MCF 10A (cell line): ENCODE measurements at regions of chrX and their contacts with region 1.

Region 1: DNA sequence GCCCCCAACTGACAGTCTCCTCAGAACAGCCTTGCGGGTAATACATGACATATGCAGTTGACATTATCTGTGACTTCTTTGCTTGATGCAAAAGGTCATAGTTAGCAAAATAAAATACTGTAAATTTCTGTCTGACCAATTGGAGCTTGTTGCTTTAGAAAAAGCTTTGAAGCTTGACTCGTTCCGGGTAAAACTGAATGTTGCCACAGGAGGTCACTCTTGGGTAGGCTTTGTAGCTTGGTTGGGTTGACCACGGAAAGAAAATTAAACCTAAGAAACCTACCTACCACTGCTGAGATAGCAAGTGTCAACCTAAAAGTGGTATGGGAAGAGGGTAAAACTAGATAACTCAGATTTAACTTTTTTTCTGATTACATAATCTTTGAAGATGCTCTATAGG is 23.2 kb downstream of the PRPS2 start:
- DNase-seq: peak; percentile 64
- H3K4me3 Mint-ChIP-seq: no peak overlapping the region
- H3K27ac Mint-ChIP-seq: no peak overlapping the region
- H3K4me1 Mint-ChIP-seq: peaks cover 5% of the 10 kb centered on the region
- H3K27me3 Mint-ChIP-seq: peaks cover 21% of the 10 kb centered on the region
- CTCF ChIP-seq: peak; percentile 57

Region 2: GRCh38 chrX:12777670-12778069 is 36.8 kb before region 1 on chrX:
- CTCF ChIA-PET with region 1: no interaction called
- POLR2A ChIA-PET with region 1: no interaction called
- intact Hi-C with region 1: no loop called
- DNase-seq: no peak
- H3K4me3 Mint-ChIP-seq: no peak overlapping the region
- H3K27ac Mint-ChIP-seq: no peak overlapping the region
- H3K4me1 Mint-ChIP-seq: no peaks in the 10 kb centered on the region
- H3K27me3 Mint-ChIP-seq: peaks cover 69% of the 10 kb centered on the region
- CTCF ChIP-seq: no peak

Region 3: DNA sequence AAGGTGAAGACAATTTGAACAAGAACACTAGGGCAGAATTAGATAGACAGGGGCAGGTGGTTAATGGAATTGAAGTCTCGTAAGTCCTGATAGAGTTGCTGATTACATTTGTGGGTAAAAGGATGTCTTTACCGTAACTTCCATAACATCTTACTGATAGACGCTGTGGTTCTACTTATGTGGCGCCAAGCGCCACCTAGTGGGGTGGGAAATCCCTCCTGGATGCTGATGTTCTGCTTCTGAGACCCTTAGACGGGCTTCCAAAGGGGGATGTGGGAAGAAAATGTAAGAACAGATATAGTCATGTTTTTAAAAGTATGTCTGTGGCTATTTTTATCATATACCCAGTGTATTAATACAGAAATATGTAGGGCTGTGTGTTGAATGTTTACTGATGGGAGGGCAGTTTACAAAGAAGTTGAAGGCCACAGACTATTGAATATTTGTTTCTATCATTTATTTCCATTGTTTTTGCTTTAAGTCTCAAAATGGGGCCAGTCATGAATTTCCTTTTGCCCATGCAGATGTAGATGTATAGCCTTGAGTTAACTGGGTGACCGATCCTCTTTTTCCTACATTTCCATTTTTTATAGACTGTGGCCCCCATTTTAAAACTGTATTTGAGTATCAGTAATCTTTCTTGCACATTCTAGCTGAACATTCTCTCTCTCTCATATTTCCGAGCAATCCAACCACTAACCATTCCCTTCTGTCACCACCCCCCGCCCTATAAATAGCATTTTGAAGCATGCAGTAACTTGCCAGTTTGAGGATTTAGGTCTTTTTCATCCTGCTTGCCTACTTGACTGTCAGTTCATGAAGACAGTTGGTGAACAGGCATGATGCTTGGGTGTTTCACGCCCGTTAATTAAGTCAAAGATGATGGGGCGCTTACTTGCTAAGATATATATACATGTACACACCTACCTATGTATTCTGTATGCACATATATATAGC is 79.9 kb after region 1 on chrX:
- CTCF ChIA-PET with region 1: interaction called, 147 read pairs
- POLR2A ChIA-PET with region 1: interaction called, 5 read pairs
- intact Hi-C with region 1: loop called (anchors 1 kb)
- DNase-seq: peak; percentile 53
- H3K4me3 Mint-ChIP-seq: no peak overlapping the region
- H3K27ac Mint-ChIP-seq: no peak overlapping the region
- H3K4me1 Mint-ChIP-seq: no peaks in the 10 kb centered on the region
- H3K27me3 Mint-ChIP-seq: peaks cover 48% of the 10 kb centered on the region
- CTCF ChIP-seq: peak; percentile 85

Region 4: GRCh38 chrX:12901486-12901885 is 87.1 kb after region 1 on chrX:
- CTCF ChIA-PET with region 1: interaction called, 147 read pairs
- POLR2A ChIA-PET with region 1: no interaction called
- intact Hi-C with region 1: no loop called
- DNase-seq: peak; percentile 76
- H3K4me3 Mint-ChIP-seq: no peak overlapping the region
- H3K27ac Mint-ChIP-seq: no peak overlapping the region
- H3K4me1 Mint-ChIP-seq: peaks cover 8% of the 10 kb centered on the region
- H3K27me3 Mint-ChIP-seq: peaks cover 54% of the 10 kb centered on the region
- CTCF ChIP-seq: peak; percentile 68

Region 5: DNA sequence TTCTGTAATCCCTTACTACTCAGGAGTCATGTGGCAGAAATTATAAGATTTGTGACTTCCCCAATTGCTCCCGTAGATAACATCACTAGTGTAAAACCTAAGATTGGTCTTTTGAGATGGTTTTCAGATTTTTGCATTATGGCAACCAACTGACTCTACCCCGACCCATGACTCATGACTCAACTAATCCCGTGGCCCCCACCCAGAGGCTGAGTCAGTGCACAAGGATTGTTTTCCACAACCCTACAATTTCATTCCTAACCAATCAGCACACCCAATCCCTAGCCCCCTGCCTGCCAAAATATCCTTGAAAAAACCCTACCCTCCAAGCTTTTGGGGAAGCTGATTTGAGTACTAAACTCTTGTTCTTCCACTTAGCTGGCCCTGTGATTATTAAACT is 339.4 kb after region 1 on chrX:
- CTCF ChIA-PET with region 1: no interaction called
- POLR2A ChIA-PET with region 1: no interaction called
- intact Hi-C with region 1: no loop called
- DNase-seq: no peak
- H3K4me3 Mint-ChIP-seq: no peak overlapping the region
- H3K27ac Mint-ChIP-seq: no peak overlapping the region
- H3K4me1 Mint-ChIP-seq: no peaks in the 10 kb centered on the region
- H3K27me3 Mint-ChIP-seq: no peaks in the 10 kb centered on the region
- CTCF ChIP-seq: no peak

Region 6: DNA sequence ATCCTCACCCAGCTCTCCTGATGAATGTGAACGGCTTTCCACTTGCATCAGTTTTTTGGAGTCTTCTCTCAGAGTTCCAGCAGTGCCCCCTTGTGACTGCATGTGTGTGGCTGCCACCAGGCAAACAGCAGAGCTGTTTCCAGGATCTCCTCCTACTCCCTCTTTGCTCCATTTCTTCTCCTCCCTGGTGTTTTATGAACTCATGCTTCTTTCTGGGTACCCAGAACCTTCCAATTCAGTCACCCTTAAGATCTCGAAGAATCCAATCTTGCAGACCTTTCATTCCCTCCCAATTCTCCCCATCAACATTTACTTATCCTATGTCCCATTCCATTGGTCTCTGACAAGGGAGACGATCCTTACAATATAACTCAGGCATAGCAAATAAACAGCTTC is 831.7 kb after region 1 on chrX:
- CTCF ChIA-PET with region 1: interaction called, 4 read pairs
- POLR2A ChIA-PET with region 1: no interaction called
- intact Hi-C with region 1: loop called (anchors 2 kb)
- DNase-seq: peak; percentile 77
- H3K4me3 Mint-ChIP-seq: no peak overlapping the region
- H3K27ac Mint-ChIP-seq: no peak overlapping the region
- H3K4me1 Mint-ChIP-seq: peaks cover 8% of the 10 kb centered on the region
- H3K27me3 Mint-ChIP-seq: peaks cover 55% of the 10 kb centered on the region
- CTCF ChIP-seq: peak; percentile 54